GM12878 (cell line): ENCODE measurements at regions of chr18 and their contacts with region 1.

Region 1: GRCh38 chr18:11149441-11150270 is at the start of gene PIEZO2:
- DNase-seq: peak; percentile 43
- ATAC-seq: peak; percentile 89
- H3K4me3 ChIP-seq: peak within 1 kb of the TSS; percentile 95
- H3K27ac ChIP-seq: peak within 1 kb of the TSS; percentile 88
- H3K4me1 ChIP-seq: peaks cover 23% of the 10 kb centered on the region
- H3K27me3 ChIP-seq: no peaks in the 10 kb centered on the region
- CTCF ChIP-seq: no peak
- EP300 ChIP-seq: no peak
- POLR2A ChIP-seq: peak; percentile 89
- RAD21 ChIP-seq: no peak
- polyA plus RNA-seq, gene PIEZO2: 6.7 to 7.1 TPM

Region 2: GRCh38 chr18:10530852-10531251 is 618.8 kb before region 1 on chr18:
- CTCF ChIA-PET with region 1: interaction called, 12 read pairs
- POLR2A ChIA-PET with region 1: no interaction called
- RAD21 ChIA-PET with region 1: interaction called, 7 read pairs
- SMC1A ChIA-PET with region 1: interaction called, 5 read pairs
- in situ Hi-C with region 1: no loop called
- intact Hi-C with region 1: no loop called
- DNase-seq: no peak
- ATAC-seq: no peak
- H3K4me3 ChIP-seq: no peak overlapping the region
- H3K27ac ChIP-seq: no peak overlapping the region
- H3K4me1 ChIP-seq: peaks cover 10% of the 10 kb centered on the region
- H3K27me3 ChIP-seq: no peaks in the 10 kb centered on the region
- CTCF ChIP-seq: no peak
- EP300 ChIP-seq: no peak
- POLR2A ChIP-seq: no peak
- RAD21 ChIP-seq: no peak

Region 3: DNA sequence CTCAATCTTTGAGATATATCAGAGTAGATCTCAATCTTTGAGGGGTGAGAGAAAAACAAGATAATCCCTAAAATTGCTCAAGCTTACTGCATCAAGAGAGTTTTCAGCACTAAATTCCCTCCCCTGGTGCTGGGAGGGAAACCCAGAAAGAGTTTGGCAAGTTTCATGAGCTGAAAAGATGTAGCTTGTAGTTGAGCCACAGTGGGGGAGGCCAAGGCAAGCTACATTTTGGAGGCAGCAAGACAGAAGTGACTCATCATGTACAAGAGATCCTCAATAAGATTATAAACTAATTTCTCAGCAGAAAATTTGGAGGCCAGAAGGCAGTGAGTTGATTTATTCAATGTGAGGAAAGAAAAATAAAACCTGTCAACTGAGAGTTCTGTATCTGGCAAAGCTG is 308.5 kb before region 1 on chr18:
- CTCF ChIA-PET with region 1: interaction called, 225 read pairs
- POLR2A ChIA-PET with region 1: interaction called, 3 read pairs
- RAD21 ChIA-PET with region 1: interaction called, 4 read pairs
- SMC1A ChIA-PET with region 1: interaction called, 256 read pairs
- in situ Hi-C with region 1: no loop called
- intact Hi-C with region 1: no loop called
- DNase-seq: no peak
- ATAC-seq: no peak
- H3K4me3 ChIP-seq: no peak overlapping the region
- H3K27ac ChIP-seq: peak overlapping the region; percentile 13; the same call in 1 of the 2 replicates
- H3K4me1 ChIP-seq: peaks cover 15% of the 10 kb centered on the region
- H3K27me3 ChIP-seq: no peaks in the 10 kb centered on the region
- CTCF ChIP-seq: no peak
- EP300 ChIP-seq: no peak
- POLR2A ChIP-seq: no peak
- RAD21 ChIP-seq: no peak

Region 4: GRCh38 chr18:10928772-10929373 is 220.8 kb before region 1 on chr18:
- CTCF ChIA-PET with region 1: interaction called, 5 read pairs
- POLR2A ChIA-PET with region 1: interaction called, 5 read pairs
- RAD21 ChIA-PET with region 1: interaction called, 11 read pairs
- SMC1A ChIA-PET with region 1: interaction called, 8 read pairs
- in situ Hi-C with region 1: no loop called
- intact Hi-C with region 1: no loop called
- DNase-seq: peak; percentile 87
- ATAC-seq: peak; percentile 76
- H3K4me3 ChIP-seq: peak overlapping the region; percentile 48; the same call in 1 of the 2 replicates
- H3K27ac ChIP-seq: peak overlapping the region; percentile 96
- H3K4me1 ChIP-seq: peaks cover 37% of the 10 kb centered on the region
- H3K27me3 ChIP-seq: no peaks in the 10 kb centered on the region
- CTCF ChIP-seq: no peak
- EP300 ChIP-seq: peak; percentile 96 to 97
- POLR2A ChIP-seq: no peak
- RAD21 ChIP-seq: peak; percentile 24; the same call in 1 of the 2 replicates

Region 5: GRCh38 chr18:11052800-11053199 is 96.9 kb before region 1 on chr18:
- CTCF ChIA-PET with region 1: interaction called, 10 read pairs
- POLR2A ChIA-PET with region 1: interaction called, 7 read pairs
- RAD21 ChIA-PET with region 1: interaction called, 10 read pairs
- SMC1A ChIA-PET with region 1: interaction called, 18 read pairs
- in situ Hi-C with region 1: no loop called
- intact Hi-C with region 1: no loop called
- DNase-seq: no peak
- ATAC-seq: peak; percentile 92
- H3K4me3 ChIP-seq: no peak overlapping the region
- H3K27ac ChIP-seq: peak overlapping the region; percentile 22; the same call in 1 of the 2 replicates
- H3K4me1 ChIP-seq: peaks cover 15% of the 10 kb centered on the region
- H3K27me3 ChIP-seq: no peaks in the 10 kb centered on the region
- CTCF ChIP-seq: no peak
- EP300 ChIP-seq: no peak; a peak in 1 of 4 replicates
- POLR2A ChIP-seq: no peak
- RAD21 ChIP-seq: no peak

Region 6: GRCh38 chr18:11183637-11184036 is 34.0 kb after region 1 on chr18:
- CTCF ChIA-PET with region 1: no interaction called
- POLR2A ChIA-PET with region 1: no interaction called
- RAD21 ChIA-PET with region 1: no interaction called
- SMC1A ChIA-PET with region 1: no interaction called
- in situ Hi-C with region 1: no loop called
- intact Hi-C with region 1: no loop called
- DNase-seq: no peak
- ATAC-seq: no peak
- H3K4me3 ChIP-seq: no peak overlapping the region
- H3K27ac ChIP-seq: no peak overlapping the region
- H3K4me1 ChIP-seq: no peaks in the 10 kb centered on the region
- H3K27me3 ChIP-seq: peaks cover 0 to 9% of the 10 kb centered on the region in 2 experiments; a peak in 3 of 4 replicates
- CTCF ChIP-seq: no peak
- EP300 ChIP-seq: no peak
- POLR2A ChIP-seq: no peak
- RAD21 ChIP-seq: no peak

Region 7: DNA sequence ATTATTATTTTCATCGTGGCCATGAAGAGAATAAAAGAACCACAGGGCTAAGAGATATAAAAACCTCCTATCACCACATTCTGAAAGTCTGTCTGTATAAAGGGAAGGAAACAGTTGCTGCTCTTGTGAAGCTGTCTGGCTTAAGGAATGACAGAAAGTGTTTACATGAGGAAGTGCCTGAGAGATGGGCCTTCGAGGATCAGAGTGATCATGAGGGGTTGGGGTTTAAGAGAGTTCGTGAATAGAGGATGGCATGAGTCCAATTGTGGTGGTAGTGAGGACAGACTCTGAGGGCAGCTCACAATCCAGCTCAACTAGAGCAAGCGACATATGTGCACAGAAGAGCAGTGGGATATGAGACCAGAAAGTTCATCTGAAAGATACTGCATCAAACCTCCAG is 65.6 kb after region 1 on chr18:
- CTCF ChIA-PET with region 1: no interaction called
- POLR2A ChIA-PET with region 1: no interaction called
- RAD21 ChIA-PET with region 1: no interaction called
- SMC1A ChIA-PET with region 1: no interaction called
- in situ Hi-C with region 1: no loop called
- intact Hi-C with region 1: no loop called
- DNase-seq: no peak
- ATAC-seq: no peak
- H3K4me3 ChIP-seq: no peak overlapping the region
- H3K27ac ChIP-seq: no peak overlapping the region
- H3K4me1 ChIP-seq: no peaks in the 10 kb centered on the region
- H3K27me3 ChIP-seq: peaks cover 0 to 14% of the 10 kb centered on the region in 2 experiments; a peak in 2 of 4 replicates
- CTCF ChIP-seq: no peak
- EP300 ChIP-seq: no peak
- POLR2A ChIP-seq: no peak
- RAD21 ChIP-seq: no peak

Region 8: DNA sequence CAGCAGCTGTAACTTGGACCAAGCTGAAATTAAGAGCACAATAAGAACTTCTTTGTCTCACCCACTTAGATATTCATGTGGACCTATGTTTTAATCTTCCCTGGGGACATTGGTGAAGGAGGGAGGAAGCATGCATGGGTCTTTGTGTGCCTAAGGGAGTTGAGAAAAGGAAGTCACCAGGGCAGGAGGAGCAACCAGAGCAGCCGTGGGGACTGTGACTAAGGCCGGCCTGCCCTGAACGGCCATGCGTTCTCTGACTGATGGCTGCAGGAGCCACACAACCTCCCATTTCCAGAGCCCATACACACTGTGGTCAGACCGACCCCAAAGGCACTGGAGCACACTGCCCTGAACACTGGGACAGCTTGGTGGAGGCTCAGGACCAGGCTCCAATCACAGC is 416.1 kb after region 1 on chr18:
- CTCF ChIA-PET with region 1: no interaction called
- POLR2A ChIA-PET with region 1: no interaction called
- RAD21 ChIA-PET with region 1: no interaction called
- SMC1A ChIA-PET with region 1: no interaction called
- in situ Hi-C with region 1: no loop called
- intact Hi-C with region 1: no loop called
- DNase-seq: no peak
- ATAC-seq: no peak
- H3K4me3 ChIP-seq: no peak overlapping the region
- H3K27ac ChIP-seq: no peak overlapping the region
- H3K4me1 ChIP-seq: no peaks in the 10 kb centered on the region; the same call in 1 of the 2 replicates
- H3K27me3 ChIP-seq: peaks cover 0 to 3% of the 10 kb centered on the region in 2 experiments; a peak in 1 of 4 replicates
- CTCF ChIP-seq: no peak
- EP300 ChIP-seq: no peak
- POLR2A ChIP-seq: no peak
- RAD21 ChIP-seq: no peak